Activated CD8-positive, alpha-beta T cell treated with anti-CD3 and anti-CD28 coated beads for 36 hours (primary cell): ENCODE measurements at regions of chr17 and their contacts with region 1.

Region 1: GRCh38 chr17:14118951-14119350 is 49.6 kb downstream of the COX10 start:
- DNase-seq: peak; percentile 10
- ATAC-seq: peak; percentile 90
- H3K4me3 Mint-ChIP-seq: no peak overlapping the region
- H3K27ac Mint-ChIP-seq: peak overlapping the region; percentile 87
- H3K4me1 Mint-ChIP-seq: peaks cover 83% of the 10 kb centered on the region
- H3K27me3 Mint-ChIP-seq: no peaks in the 10 kb centered on the region
- CTCF ChIP-seq: no peak

Region 2: DNA sequence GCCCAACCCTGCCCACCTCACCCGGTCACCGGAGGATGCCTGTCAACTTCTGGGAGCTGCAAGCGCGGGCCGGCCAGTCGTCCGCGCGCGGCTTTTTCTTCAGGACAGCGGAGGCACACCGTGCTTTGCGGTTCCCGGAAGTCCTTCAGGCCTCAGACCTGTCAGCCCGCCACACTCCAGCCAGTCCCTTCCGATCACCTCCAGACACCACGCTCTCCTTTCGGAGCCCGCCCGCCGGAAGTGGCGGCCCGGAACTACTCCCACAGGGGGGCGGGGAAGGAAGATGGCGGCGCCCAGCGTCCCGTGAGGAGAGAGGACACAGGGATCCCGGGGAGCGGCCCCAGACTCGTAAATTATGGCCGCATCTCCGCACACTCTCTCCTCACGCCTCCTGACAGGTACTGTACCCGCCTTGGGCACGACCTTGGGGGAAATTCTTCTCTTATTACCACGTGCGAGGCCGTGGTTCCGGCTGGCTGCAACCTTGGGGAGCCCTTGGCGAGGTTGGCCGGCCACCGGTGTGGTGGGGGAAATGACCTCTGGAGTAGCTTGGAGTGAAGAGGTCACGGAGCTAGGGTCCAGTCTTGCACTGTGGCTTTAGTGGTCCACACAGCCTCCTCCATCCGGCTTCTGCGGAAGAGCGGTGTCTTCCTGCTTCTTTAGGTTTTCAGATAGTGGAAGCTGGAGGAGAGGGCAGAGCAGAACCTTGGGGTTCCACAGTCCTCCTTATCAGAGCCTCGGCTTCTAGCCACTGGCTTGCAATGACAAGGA is 49.5 kb before region 1 on chr17 and contains the start of gene COX10:
- CTCF ChIA-PET with region 1: no interaction called
- POLR2A ChIA-PET with region 1: no interaction called
- intact Hi-C with region 1: loop called (anchors 10 kb)
- DNase-seq: peak; percentile 88
- ATAC-seq: peak; percentile 98
- H3K4me3 Mint-ChIP-seq: peak within 1 kb of the TSS; percentile 97
- H3K27ac Mint-ChIP-seq: peak within 1 kb of the TSS; percentile 96
- H3K4me1 Mint-ChIP-seq: peaks cover 45% of the 10 kb centered on the region
- H3K27me3 Mint-ChIP-seq: no peaks in the 10 kb centered on the region
- CTCF ChIP-seq: no peak
- total RNA-seq, gene COX10: 26.0 to 28.6 TPM

Region 3: GRCh38 chr17:14203388-14203787 is 84.4 kb after region 1 on chr17:
- CTCF ChIA-PET with region 1: no interaction called
- POLR2A ChIA-PET with region 1: no interaction called
- intact Hi-C with region 1: loop called (anchors 10 kb)
- DNase-seq: peak; percentile 44
- ATAC-seq: peak; percentile 36
- H3K4me3 Mint-ChIP-seq: no peak overlapping the region
- H3K27ac Mint-ChIP-seq: peak overlapping the region; percentile 69
- H3K4me1 Mint-ChIP-seq: peaks cover 81% of the 10 kb centered on the region
- H3K27me3 Mint-ChIP-seq: no peaks in the 10 kb centered on the region
- CTCF ChIP-seq: peak; percentile 28